ENCODE measurements at regions of chr10 and their contacts with region 1.

Region 1: DNA sequence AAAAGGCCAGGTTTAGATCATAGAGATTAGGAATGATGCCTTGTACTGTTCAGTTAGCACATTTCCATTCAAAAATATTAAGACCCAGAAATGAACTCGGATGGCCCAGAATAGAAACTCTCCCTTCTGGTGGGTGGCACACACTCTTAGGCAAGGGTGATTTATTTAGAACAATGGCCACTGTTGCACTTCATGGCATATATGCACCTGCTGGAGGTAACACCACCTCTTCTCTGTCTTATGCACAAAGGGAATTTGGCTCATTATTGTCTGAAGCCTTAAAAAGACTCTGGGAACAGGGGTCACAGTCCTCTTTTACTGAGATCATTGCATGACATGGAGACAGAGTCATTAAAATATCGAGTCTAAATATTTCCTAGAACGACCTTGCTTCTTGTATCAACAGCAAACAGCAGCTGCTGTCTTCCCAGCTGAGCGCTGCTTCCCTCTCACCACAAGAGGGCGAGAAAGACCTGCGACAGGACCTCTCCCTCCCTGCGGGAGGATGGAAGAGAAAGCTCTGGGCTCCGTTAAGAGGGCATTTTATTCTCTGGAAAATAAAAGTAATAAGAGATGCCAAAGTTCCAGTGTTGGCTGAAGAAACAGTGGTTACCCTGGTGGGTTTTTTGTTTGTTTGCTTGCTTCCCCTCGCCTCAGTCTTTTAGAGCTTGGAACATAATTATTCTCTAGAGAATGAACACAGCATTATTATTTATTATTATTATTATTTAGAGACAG is 13.6 kb upstream of the BAMBI start:
- DNase-seq: peak; percentile 88 to 90
- H3K4me3 ChIP-seq: no peak overlapping the region
- H3K4me3 Mint-ChIP-seq: no peak overlapping the region
- H3K27ac Mint-ChIP-seq: no peak overlapping the region
- H3K4me1 ChIP-seq: peaks cover 12% of the 10 kb centered on the region
- H3K4me1 Mint-ChIP-seq: peaks cover 34% of the 10 kb centered on the region
- H3K27me3 ChIP-seq: no peaks in the 10 kb centered on the region
- H3K27me3 Mint-ChIP-seq: peaks cover 3% of the 10 kb centered on the region
- CTCF ChIP-seq: peak; percentile 99

Region 2: DNA sequence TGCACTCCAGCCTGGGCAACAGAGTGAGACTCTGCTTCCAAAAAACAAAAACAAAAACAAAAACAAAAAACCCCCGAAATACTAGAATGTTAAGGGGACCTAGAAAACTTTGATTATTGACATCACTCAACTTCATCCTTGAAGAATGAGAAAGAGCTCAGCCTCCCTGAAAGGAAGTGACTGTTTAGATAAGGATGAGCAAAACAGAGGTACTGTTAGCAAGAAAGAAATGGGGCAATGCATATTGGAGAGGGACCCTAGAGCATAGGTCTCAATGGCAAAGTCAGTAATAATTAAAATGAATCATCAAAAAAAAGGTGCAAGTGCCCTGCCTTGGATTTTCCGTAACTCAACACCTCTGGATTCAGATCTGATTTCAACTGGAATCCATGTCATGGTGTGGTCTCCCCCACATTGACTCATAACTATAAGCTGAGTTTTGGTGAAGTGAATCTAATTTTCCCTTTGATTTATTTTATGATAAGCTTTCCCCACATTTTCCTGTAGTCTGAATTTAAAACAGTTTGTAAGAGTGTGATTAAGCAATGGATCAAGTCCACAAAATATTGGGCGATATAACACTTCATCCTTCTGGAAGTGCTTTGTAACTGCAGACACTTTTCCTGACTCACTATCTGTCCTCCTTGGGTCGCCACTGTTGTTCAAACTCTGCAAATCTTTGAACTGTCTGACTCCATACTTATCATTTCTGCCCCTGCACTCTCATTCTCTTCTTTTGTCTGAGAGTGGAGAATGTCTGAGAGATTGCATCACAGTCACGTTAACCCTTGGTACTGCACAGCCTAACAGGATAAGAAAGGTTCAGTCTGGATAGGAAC is 400.3 kb after region 1 on chr10:
- CTCF ChIA-PET with region 1: no interaction called
- POLR2A ChIA-PET with region 1: no interaction called
- intact Hi-C with region 1: loop called (anchors 2 kb)
- DNase-seq: peak; percentile 87 to 89
- H3K4me3 ChIP-seq: 0 out of 2 replicates have a peak overlapping the region, but pooled peaks have one; percentile 14
- H3K4me3 Mint-ChIP-seq: peak overlapping the region; percentile 32
- H3K27ac Mint-ChIP-seq: peak overlapping the region; percentile 68
- H3K4me1 ChIP-seq: peaks cover 60% of the 10 kb centered on the region
- H3K4me1 Mint-ChIP-seq: peaks cover 41% of the 10 kb centered on the region
- H3K27me3 ChIP-seq: no peaks in the 10 kb centered on the region
- H3K27me3 Mint-ChIP-seq: no peaks in the 10 kb centered on the region
- CTCF ChIP-seq: peak; percentile 19 to 47

Region 3: GRCh38 chr10:29131952-29132820 is 468.4 kb after region 1 on chr10:
- CTCF ChIA-PET with region 1: interaction called, 15 read pairs
- POLR2A ChIA-PET with region 1: no interaction called
- intact Hi-C with region 1: loop called (anchors 1 kb)
- DNase-seq: no peak
- H3K4me3 ChIP-seq: no peak overlapping the region
- H3K4me3 Mint-ChIP-seq: no peak overlapping the region
- H3K27ac Mint-ChIP-seq: peak overlapping the region; percentile 51
- H3K4me1 ChIP-seq: peaks cover 33% of the 10 kb centered on the region
- H3K4me1 Mint-ChIP-seq: peaks cover 15% of the 10 kb centered on the region
- H3K27me3 ChIP-seq: no peaks in the 10 kb centered on the region
- H3K27me3 Mint-ChIP-seq: no peaks in the 10 kb centered on the region
- CTCF ChIP-seq: no peak

Region 4: DNA sequence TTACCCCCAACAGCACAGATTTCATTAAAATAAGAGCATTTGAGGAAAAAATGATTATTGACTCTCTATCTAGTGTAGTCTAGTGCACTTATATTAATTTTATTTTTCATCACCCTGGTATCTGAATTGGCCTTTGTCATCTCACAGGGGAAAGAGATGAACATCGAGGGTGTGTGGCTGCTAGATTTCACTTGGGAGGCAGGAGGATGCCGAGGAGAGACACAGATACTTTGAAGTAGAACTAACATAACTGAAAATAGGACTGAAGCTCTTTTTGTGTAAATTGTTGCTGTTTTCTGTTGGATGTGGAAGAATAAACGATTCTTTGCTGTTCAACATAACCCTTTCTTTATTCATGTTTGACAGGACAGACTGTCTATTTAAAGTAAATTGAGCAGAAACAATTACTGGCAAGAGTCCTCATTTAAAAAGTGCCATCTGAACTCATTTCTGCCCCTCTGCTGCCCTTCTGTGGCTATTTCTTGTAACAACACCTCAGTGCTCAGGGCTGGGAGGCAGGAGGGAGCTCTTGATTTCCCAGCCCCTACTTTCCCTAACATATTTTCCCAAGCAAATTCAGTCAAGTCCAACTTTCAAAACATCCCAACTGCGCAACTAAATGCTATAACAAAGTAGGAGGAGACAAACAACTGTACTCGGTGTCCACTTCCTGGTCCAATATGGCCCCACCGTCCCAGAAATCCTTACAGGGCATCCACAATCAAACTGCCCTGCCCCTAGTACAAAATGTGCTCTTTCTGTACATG is 640.7 kb after region 1 on chr10:
- CTCF ChIA-PET with region 1: interaction called, 28 read pairs
- POLR2A ChIA-PET with region 1: no interaction called
- intact Hi-C with region 1: loop called (anchors 1 kb)
- DNase-seq: peak; percentile 74 to 86
- H3K4me3 ChIP-seq: no peak overlapping the region
- H3K4me3 Mint-ChIP-seq: peak overlapping the region; percentile 55
- H3K27ac Mint-ChIP-seq: peak overlapping the region; percentile 48
- H3K4me1 ChIP-seq: peaks cover 14% of the 10 kb centered on the region; the same call in 1 of the 2 replicates
- H3K4me1 Mint-ChIP-seq: no peaks in the 10 kb centered on the region
- H3K27me3 ChIP-seq: no peaks in the 10 kb centered on the region
- H3K27me3 Mint-ChIP-seq: no peaks in the 10 kb centered on the region
- CTCF ChIP-seq: peak; percentile 95 to 99

Region 5: GRCh38 chr10:29392376-29393021 is 728.8 kb after region 1 on chr10:
- CTCF ChIA-PET with region 1: interaction called, 3 read pairs
- POLR2A ChIA-PET with region 1: no interaction called
- intact Hi-C with region 1: loop called (anchors 1 kb)
- DNase-seq: peak; percentile 62 to 76
- H3K4me3 ChIP-seq: no peak overlapping the region
- H3K4me3 Mint-ChIP-seq: no peak overlapping the region
- H3K27ac Mint-ChIP-seq: no peak overlapping the region
- H3K4me1 ChIP-seq: no peaks in the 10 kb centered on the region
- H3K4me1 Mint-ChIP-seq: no peaks in the 10 kb centered on the region
- H3K27me3 ChIP-seq: no peaks in the 10 kb centered on the region
- H3K27me3 Mint-ChIP-seq: peaks cover 5% of the 10 kb centered on the region
- CTCF ChIP-seq: peak; percentile 93 to 95

Region 6: DNA sequence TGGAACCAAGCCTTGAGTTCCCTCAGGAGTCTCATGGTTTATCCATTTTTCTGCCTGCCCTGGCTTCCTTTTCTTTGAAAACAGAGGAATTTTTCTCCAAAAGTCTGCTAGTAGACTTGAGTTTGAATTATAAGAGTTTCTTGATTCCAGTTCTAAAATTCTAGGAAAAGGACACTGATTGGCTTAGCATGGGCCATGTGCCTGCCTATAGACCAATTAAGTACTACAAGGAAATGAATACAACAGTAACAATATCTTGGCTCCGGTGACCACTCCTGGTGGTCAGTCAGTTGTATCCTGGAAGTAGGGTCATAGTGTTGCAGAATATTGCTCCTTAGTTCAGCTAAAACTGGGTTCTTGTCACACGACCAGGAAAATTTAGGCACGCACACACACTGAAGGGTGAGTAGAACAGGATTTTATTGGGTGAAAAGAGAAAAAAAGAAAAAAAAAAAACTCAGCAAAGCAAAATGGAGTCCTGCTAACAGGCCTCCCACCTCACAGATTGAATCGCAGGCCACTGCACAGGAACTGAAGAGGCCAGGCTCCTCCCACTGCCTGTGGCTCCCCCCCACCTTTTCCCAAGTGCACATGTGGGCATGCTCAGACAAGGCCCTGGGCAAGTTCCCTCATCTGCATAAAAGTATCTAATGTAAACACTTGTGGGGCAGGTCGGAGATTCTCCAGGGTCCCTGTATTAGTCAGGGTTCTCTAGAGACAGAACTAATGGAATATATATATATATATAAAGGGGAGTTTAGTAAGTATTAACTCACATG is 780.2 kb after region 1 on chr10:
- CTCF ChIA-PET with region 1: no interaction called
- POLR2A ChIA-PET with region 1: no interaction called
- intact Hi-C with region 1: loop called (anchors 5 kb)
- DNase-seq: peak in 1 of 2 experiments; percentile 67
- H3K4me3 ChIP-seq: no peak overlapping the region
- H3K4me3 Mint-ChIP-seq: no peak overlapping the region
- H3K27ac Mint-ChIP-seq: no peak overlapping the region
- H3K4me1 ChIP-seq: no peaks in the 10 kb centered on the region
- H3K4me1 Mint-ChIP-seq: peaks cover 4% of the 10 kb centered on the region
- H3K27me3 ChIP-seq: no peaks in the 10 kb centered on the region
- H3K27me3 Mint-ChIP-seq: no peaks in the 10 kb centered on the region
- CTCF ChIP-seq: no peak